HepG2 (cell line): ENCODE measurements at regions of chr18 and their contacts with region 1.

Region 1: GRCh38 chr18:26813043-26813442 is 52.5 kb downstream of the AQP4 start:
- DNase-seq: peak; percentile 56
- ATAC-seq: peak; percentile 87
- H3K4me3 ChIP-seq: no peak overlapping the region
- H3K27ac ChIP-seq: no peak overlapping the region
- H3K4me1 ChIP-seq: no peaks in the 10 kb centered on the region
- H3K27me3 ChIP-seq: no peaks in the 10 kb centered on the region
- CTCF ChIP-seq: peak; percentile 71
- EP300 ChIP-seq: no peak
- POLR2A ChIP-seq: no peak
- RAD21 ChIP-seq: peak; percentile 48; the same call in 1 of the 2 replicates

Region 2: GRCh38 chr18:27005589-27005988 is 192.5 kb after region 1 on chr18:
- CTCF ChIA-PET with region 1: no interaction called
- POLR2A ChIA-PET with region 1: no interaction called
- in situ Hi-C with region 1: no loop called
- intact Hi-C with region 1: loop called (anchors 5 kb)
- DNase-seq: peak; percentile 22
- ATAC-seq: peak; percentile 83
- H3K4me3 ChIP-seq: no peak overlapping the region
- H3K27ac ChIP-seq: no peak overlapping the region
- H3K4me1 ChIP-seq: no peaks in the 10 kb centered on the region
- H3K27me3 ChIP-seq: no peaks in the 10 kb centered on the region
- CTCF ChIP-seq: peak; percentile 43; the same call in 1 of the 2 replicates
- EP300 ChIP-seq: no peak
- POLR2A ChIP-seq: no peak
- RAD21 ChIP-seq: no peak

Region 3: DNA sequence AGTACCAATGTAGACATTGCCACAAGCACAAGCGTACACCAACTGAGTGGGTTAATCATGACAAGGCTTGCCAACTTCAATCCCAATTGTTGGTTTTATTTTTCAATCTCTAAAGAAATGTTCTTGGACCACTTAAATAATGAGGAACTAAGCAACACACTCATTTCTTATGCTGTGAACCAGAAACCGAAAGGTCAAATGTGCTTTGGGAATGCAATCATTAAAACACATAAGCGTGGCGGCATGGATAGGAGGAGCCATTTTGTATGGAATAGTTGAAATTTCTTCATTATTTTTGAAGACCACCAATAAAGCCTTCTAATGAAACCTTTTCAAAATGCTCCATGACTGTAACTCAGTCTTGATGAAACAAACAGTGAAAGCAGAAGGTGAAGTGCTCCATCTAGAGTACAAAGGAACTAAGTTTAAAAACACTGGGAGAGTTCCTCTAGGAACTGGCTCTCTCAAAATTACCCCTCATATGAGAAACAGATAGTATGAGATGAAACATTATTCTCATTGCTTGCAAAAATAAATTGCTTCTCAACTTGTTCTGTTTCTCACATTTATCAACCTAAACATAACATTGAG is 485.3 kb after region 1 on chr18:
- CTCF ChIA-PET with region 1: no interaction called
- POLR2A ChIA-PET with region 1: no interaction called
- in situ Hi-C with region 1: loop called (anchors 25 kb)
- intact Hi-C with region 1: loop called (anchors 1 kb)
- DNase-seq: peak; percentile 13
- ATAC-seq: peak; percentile 62
- H3K4me3 ChIP-seq: no peak overlapping the region
- H3K27ac ChIP-seq: no peak overlapping the region
- H3K4me1 ChIP-seq: no peaks in the 10 kb centered on the region
- H3K27me3 ChIP-seq: no peaks in the 10 kb centered on the region; a peak in 1 of 5 replicates
- CTCF ChIP-seq: peak; percentile 57
- EP300 ChIP-seq: no peak
- POLR2A ChIP-seq: no peak
- RAD21 ChIP-seq: no peak

Region 4: GRCh38 chr18:27314996-27315395 is 502.0 kb after region 1 on chr18:
- CTCF ChIA-PET with region 1: no interaction called
- POLR2A ChIA-PET with region 1: no interaction called
- in situ Hi-C with region 1: loop called (anchors 25 kb)
- intact Hi-C with region 1: no loop called
- DNase-seq: no peak
- ATAC-seq: no peak
- H3K4me3 ChIP-seq: no peak overlapping the region
- H3K27ac ChIP-seq: no peak overlapping the region
- H3K4me1 ChIP-seq: no peaks in the 10 kb centered on the region
- H3K27me3 ChIP-seq: no peaks in the 10 kb centered on the region
- CTCF ChIP-seq: no peak
- EP300 ChIP-seq: no peak
- POLR2A ChIP-seq: no peak
- RAD21 ChIP-seq: no peak

Region 5: GRCh38 chr18:27428120-27428519 is 615.1 kb after region 1 on chr18:
- CTCF ChIA-PET with region 1: no interaction called
- POLR2A ChIA-PET with region 1: no interaction called
- in situ Hi-C with region 1: no loop called
- intact Hi-C with region 1: no loop called
- DNase-seq: no peak
- ATAC-seq: no peak
- H3K4me3 ChIP-seq: no peak overlapping the region
- H3K27ac ChIP-seq: no peak overlapping the region
- H3K4me1 ChIP-seq: no peaks in the 10 kb centered on the region
- H3K27me3 ChIP-seq: no peaks in the 10 kb centered on the region
- CTCF ChIP-seq: no peak
- EP300 ChIP-seq: no peak
- POLR2A ChIP-seq: no peak
- RAD21 ChIP-seq: no peak

Region 6: GRCh38 chr18:27605107-27605834 is 792.2 kb after region 1 on chr18:
- CTCF ChIA-PET with region 1: no interaction called
- POLR2A ChIA-PET with region 1: no interaction called
- in situ Hi-C with region 1: loop called (anchors 10 kb)
- intact Hi-C with region 1: loop called (anchors 5 kb)
- DNase-seq: peak; percentile 53
- ATAC-seq: peak; percentile 92
- H3K4me3 ChIP-seq: no peak overlapping the region
- H3K27ac ChIP-seq: no peak overlapping the region
- H3K4me1 ChIP-seq: no peaks in the 10 kb centered on the region
- H3K27me3 ChIP-seq: no peaks in the 10 kb centered on the region
- CTCF ChIP-seq: peak; percentile 85
- EP300 ChIP-seq: no peak
- POLR2A ChIP-seq: no peak
- RAD21 ChIP-seq: 0 out of 2 replicates have a peak, but pooled peaks have one; percentile 21